ENCODE measurements at regions of chr14 and their contacts with region 1.

Region 1: GRCh38 chr14:50860478-50861086 is 11.3 kb upstream of the ABHD12B start:
- H3K4me3 ChIP-seq: peak overlapping the region; percentile 38
- H3K27ac ChIP-seq: peak overlapping the region; percentile 69; the same call in 1 of the 2 replicates
- H3K4me1 ChIP-seq: peaks cover 7% of the 10 kb centered on the region; the same call in 1 of the 2 replicates
- CTCF ChIP-seq: no peak

Region 2: GRCh38 chr14:50778721-50779483 is 81.7 kb before region 1 on chr14:
- CTCF ChIA-PET with region 1: interaction called, 62 read pairs
- POLR2A ChIA-PET with region 1: interaction called, 3 read pairs
- H3K4me3 ChIP-seq: no peak overlapping the region
- H3K27ac ChIP-seq: no peak overlapping the region
- H3K4me1 ChIP-seq: peaks cover 16% of the 10 kb centered on the region; the same call in 1 of the 2 replicates
- CTCF ChIP-seq: no peak

Region 3: GRCh38 chr14:50830044-50830931 is 30.3 kb before region 1 on chr14:
- CTCF ChIA-PET with region 1: interaction called, 14 read pairs
- POLR2A ChIA-PET with region 1: interaction called, 7 read pairs
- H3K4me3 ChIP-seq: peak overlapping the region; percentile 76
- H3K27ac ChIP-seq: peak overlapping the region; percentile 97
- H3K4me1 ChIP-seq: peaks cover 30% of the 10 kb centered on the region
- CTCF ChIP-seq: no peak

Region 4: DNA sequence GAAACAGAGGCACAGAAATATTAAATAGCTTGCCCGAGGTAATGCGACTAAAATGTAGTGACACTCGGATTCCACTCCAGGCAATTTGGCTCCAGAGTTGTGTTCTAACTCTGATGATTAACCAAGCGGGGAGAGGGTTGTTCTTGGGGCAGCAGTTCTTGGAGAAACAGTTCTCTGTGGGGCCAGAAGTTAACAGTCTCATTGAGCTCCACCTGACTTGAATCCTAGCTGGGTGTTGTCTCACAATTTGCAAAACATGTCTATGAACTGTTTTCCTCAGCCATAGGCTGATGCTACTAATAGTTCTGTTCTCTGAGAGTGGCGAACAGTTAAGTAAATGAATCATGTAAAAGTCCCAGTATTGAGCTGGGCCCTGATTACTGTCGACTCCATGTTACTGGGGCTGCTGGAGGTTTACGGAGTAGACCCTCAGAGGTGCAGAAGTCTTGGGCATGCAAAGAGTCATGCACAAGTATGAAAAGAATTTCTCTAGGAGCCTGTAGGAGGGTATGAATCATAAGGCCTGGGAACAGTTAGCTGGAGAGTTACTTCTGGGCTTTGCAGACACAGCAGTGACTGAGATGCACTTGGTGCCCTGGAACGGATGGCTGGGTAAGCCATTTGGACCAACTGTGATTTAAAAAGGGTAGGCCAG is 14.2 kb before region 1 on chr14:
- CTCF ChIA-PET with region 1: interaction called, 13 read pairs
- POLR2A ChIA-PET with region 1: no interaction called
- H3K4me3 ChIP-seq: no peak overlapping the region
- H3K27ac ChIP-seq: no peak overlapping the region
- H3K4me1 ChIP-seq: no peaks in the 10 kb centered on the region
- CTCF ChIP-seq: no peak

Region 5: GRCh38 chr14:50871914-50872732 is 11.5 kb after region 1 on chr14 and contains the start of gene ABHD12B:
- CTCF ChIA-PET with region 1: interaction called, 11 read pairs
- POLR2A ChIA-PET with region 1: no interaction called
- H3K4me3 ChIP-seq: no peak within 1 kb of the TSS
- H3K27ac ChIP-seq: no peak within 1 kb of the TSS
- H3K4me1 ChIP-seq: no peaks in the 10 kb centered on the region
- CTCF ChIP-seq: no peak